A673 (cell line): ENCODE measurements at regions of chr7 and their contacts with region 1.

Region 1: DNA sequence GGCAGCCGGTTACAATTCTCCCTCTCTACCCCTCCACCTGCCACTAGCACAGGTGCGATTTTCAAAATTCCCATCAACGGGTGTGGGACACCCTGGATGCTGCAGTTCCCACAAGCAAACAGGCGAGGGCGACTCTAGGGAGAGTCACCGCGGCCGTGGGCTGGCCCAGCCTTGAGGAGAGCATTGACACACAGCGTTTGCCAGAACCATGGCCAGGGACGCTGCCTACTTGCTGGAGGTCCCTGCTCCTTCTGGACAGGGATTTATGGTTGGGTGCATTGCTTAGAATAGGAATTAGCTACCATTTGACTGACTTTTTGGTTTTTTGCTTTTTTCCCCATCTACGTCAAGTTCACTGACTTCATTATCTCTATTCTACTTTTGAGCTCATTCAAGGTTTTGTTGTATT is 19.0 kb upstream of the CLDN4 start:
- DNase-seq: peak; percentile 74
- H3K4me3 ChIP-seq: no peak overlapping the region
- H3K27ac ChIP-seq: no peak overlapping the region
- H3K4me1 ChIP-seq: no peaks in the 10 kb centered on the region
- H3K27me3 ChIP-seq: no peaks in the 10 kb centered on the region
- CTCF ChIP-seq: peak; percentile 85

Region 2: GRCh38 chr7:73522105-73522872 is 289.5 kb before region 1 on chr7 and contains the start of gene BAZ1B:
- CTCF ChIA-PET with region 1: no interaction called
- POLR2A ChIA-PET with region 1: no interaction called
- intact Hi-C with region 1: no loop called
- DNase-seq: peak; percentile 99
- H3K4me3 ChIP-seq: peak within 1 kb of the TSS; percentile 92
- H3K27ac ChIP-seq: peak within 1 kb of the TSS; percentile 96
- H3K4me1 ChIP-seq: peaks cover 22% of the 10 kb centered on the region
- H3K27me3 ChIP-seq: no peaks in the 10 kb centered on the region
- CTCF ChIP-seq: 0 out of 2 replicates have a peak, but pooled peaks have one; percentile 22
- total RNA-seq, gene BAZ1B: 122 and 127 TPM in 2 replicates

Region 3: GRCh38 chr7:73851410-73852234 is 39.9 kb after region 1 on chr7:
- CTCF ChIA-PET with region 1: no interaction called
- POLR2A ChIA-PET with region 1: no interaction called
- intact Hi-C with region 1: loop called (anchors 1 kb)
- DNase-seq: peak; percentile 66
- H3K4me3 ChIP-seq: no peak overlapping the region
- H3K27ac ChIP-seq: no peak overlapping the region
- H3K4me1 ChIP-seq: peaks cover 7% of the 10 kb centered on the region
- H3K27me3 ChIP-seq: no peaks in the 10 kb centered on the region
- CTCF ChIP-seq: no peak